Spleen (tissue), 13 donors: ENCODE measurements at regions of chr12 and their contacts with region 1.

Region 1: DNA sequence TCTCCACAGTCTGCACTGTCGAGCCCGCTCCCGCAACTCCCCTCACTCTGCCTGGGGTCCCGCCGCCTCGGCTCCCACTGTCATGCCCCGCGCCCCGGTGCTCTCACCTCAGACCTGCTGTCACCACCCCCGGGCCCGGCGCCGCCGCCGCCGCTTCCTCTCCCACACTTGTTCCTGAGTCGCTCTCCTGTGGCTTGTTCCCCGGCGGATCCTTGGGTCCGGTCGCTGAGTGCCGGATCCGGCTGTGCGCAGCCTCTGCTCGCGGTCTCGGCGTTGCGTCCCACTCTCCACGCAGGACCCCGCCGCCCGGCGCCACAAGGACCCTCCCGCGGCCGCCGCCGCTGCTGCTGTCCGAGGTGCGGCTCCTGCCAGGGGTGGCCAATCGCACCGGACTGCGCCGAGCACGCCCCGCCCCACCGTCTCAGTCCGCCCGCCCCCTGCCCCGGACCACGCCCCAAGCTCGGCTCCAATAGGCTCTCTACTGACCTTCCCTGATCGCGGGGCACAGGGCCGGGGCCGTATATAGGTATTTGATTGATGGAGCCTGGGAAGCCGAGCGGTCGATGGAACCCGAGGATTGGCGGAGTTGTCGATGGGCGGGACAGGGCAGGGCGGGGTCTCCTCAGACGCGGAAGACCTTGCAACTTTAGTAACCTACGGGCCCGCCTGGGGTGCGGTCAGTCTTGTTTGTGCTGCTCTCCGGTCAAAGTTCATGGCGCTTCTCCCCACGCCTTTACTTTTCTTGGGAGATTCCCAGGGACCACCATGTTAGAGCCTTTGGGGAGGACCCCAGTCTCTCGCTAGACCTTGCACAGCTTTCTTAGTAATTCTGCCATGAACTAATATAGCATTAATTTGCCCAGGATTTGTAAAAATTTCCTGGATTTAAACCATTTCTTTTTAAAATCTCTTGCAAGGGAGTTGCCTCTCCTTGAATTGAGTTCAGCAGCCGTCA is at the start of gene TAOK3:
- DNase-seq: peak; percentile 99
- H3K4me3 ChIP-seq: peak within 1 kb of the TSS; percentile 68 to 93 (median 88)
- H3K27ac ChIP-seq: peak within 1 kb of the TSS; percentile 65 to 95 (median 94)
- H3K4me1 ChIP-seq: peaks cover 17 to 83% (median 48%) of the 10 kb centered on the region in 6 donors
- H3K27me3 ChIP-seq: no peaks in the 10 kb centered on the region
- CTCF ChIP-seq: peak in 1 of 11 experiments; percentile 51
- POLR2A ChIP-seq: peak; percentile 51 to 88 (median 69)
- total RNA-seq, gene TAOK3: 53.9 to 80.8 (median 63.2) TPM

Region 2: DNA sequence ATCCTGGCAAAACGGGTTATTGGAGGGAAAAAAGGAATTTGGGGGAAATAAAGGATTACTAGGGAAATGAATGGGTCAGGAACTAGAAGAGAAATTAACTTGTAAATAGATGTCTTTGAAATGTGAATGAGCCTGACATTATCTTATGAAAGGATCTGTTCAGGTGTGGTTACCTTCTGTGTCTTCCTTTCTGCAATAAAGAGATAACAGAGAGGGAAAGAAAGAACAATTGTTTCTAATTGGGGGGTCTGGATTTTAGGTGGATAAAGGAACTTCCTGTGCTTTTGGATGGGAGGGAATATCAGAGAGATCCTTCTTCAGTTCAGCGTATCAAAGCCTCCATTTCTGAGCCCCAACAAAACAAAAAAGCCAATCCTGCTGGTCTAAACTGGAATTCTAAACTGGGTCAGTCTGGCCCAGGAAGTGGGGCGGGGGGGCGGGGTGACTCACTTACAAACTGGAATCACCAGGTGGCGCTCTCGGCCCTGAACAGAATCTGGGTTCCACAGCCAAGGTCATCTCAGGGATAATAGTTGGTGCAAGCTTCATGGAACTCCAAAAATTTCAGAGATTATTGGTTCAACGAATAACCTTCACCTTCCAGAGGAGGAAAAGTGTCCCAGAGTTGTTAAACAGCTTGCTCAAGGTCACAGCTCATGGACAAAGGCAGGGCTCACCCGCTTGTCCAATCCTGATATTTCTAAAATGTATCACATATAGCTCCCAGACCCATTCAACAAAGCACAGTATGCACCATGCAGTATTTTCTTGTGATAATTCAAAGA is 252.0 kb before region 1 on chr12:
- intact Hi-C with region 1: loop called (anchors 10 kb)
- DNase-seq: peak; percentile 86
- H3K4me3 ChIP-seq: no peak overlapping the region
- H3K27ac ChIP-seq: peak overlapping the region in 7 of 8 donors; percentile 23 to 65 (median 43)
- H3K4me1 ChIP-seq: peaks cover 4 to 13% (median 7%) of the 10 kb centered on the region in 6 donors
- H3K27me3 ChIP-seq: no peaks in the 10 kb centered on the region
- CTCF ChIP-seq: peak in 8 of 11 experiments; percentile 18 to 89 (median 80)
- POLR2A ChIP-seq: no peak

Region 3: DNA sequence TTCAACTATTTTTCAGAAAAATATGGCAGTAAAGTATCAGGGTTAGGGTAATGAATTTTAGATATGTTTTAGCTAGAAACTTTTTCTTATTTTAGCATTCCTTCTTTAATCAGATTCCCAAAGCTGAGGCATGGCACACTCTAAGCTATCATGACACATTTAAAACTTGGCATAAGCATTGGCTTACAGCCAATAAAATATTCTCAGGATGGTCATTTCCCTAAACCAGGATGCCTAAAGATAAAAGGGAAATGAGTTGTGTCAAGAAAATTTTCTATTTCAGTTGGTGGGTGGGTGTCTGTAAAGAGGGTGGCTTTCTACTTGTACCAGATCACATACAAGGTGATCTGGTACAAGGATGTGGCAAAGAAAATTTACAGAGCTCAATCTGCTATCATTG is 189.1 kb before region 1 on chr12:
- intact Hi-C with region 1: loop called (anchors 5 kb)
- DNase-seq: no peak
- H3K4me3 ChIP-seq: no peak overlapping the region
- H3K27ac ChIP-seq: no peak overlapping the region
- H3K4me1 ChIP-seq: peaks cover 0 to 22% (median 11%) of the 10 kb centered on the region in 6 donors
- H3K27me3 ChIP-seq: no peaks in the 10 kb centered on the region
- CTCF ChIP-seq: no peak
- POLR2A ChIP-seq: no peak